Activated T-helper 1 cell treated with anti-CD3 and anti-CD28 coated beads, Interleukin-12 subunit alpha, Interleukin-12 subunit beta, Interleukin-2, Interleukin-4 antibody, amounts not matched to agents 30 ng/mL and 10 ng/mL and 1 ng/mL, durations not matched to agents 14 hours and 24 hours and 36 hours (primary cell): ENCODE measurements at regions of chr20 and their contacts with region 1.

Region 1: GRCh38 chr20:57514273-57514751 is 10.6 kb downstream of the CTCFL start:
- DNase-seq: peak; percentile 6
- H3K4me3 Mint-ChIP-seq: no peak overlapping the region
- H3K27ac Mint-ChIP-seq: no peak overlapping the region
- H3K4me1 Mint-ChIP-seq: no peaks in the 10 kb centered on the region
- H3K27me3 Mint-ChIP-seq: peaks cover 22% of the 10 kb centered on the region

Region 2: GRCh38 chr20:57544860-57545479 is 30.7 kb after region 1 on chr20:
- intact Hi-C with region 1: loop called (anchors 2 kb)
- DNase-seq: no peak
- H3K4me3 Mint-ChIP-seq: no peak overlapping the region
- H3K27ac Mint-ChIP-seq: no peak overlapping the region
- H3K4me1 Mint-ChIP-seq: no peaks in the 10 kb centered on the region
- H3K27me3 Mint-ChIP-seq: peaks cover 15% of the 10 kb centered on the region

Region 3: GRCh38 chr20:57622579-57623377 is 108.5 kb after region 1 on chr20:
- intact Hi-C with region 1: no loop called
- DNase-seq: peak; percentile 42
- H3K4me3 Mint-ChIP-seq: no peak overlapping the region
- H3K27ac Mint-ChIP-seq: peak overlapping the region; percentile 31
- H3K4me1 Mint-ChIP-seq: peaks cover 60% of the 10 kb centered on the region
- H3K27me3 Mint-ChIP-seq: peaks cover 10% of the 10 kb centered on the region